ENCODE measurements at regions of chr13 and their contacts with region 1.

Region 1: GRCh38 chr13:50123862-50124536 is 108.8 kb downstream of the KCNRG start:
- DNase-seq: no peak
- H3K4me3 ChIP-seq: peak overlapping the region; percentile 81
- H3K27ac ChIP-seq: peak overlapping the region; percentile 56
- H3K4me1 ChIP-seq: peaks cover 64% of the 10 kb centered on the region
- CTCF ChIP-seq: no peak

Region 2: GRCh38 chr13:49936085-49936940 is 187.7 kb before region 1 on chr13 and contains the start of gene SPRYD7:
- CTCF ChIA-PET with region 1: no interaction called
- POLR2A ChIA-PET with region 1: no interaction called
- intact Hi-C with region 1: loop called (anchors 5 kb)
- DNase-seq: peak; percentile 98
- H3K4me3 ChIP-seq: peak within 1 kb of the TSS; percentile 81
- H3K27ac ChIP-seq: peak within 1 kb of the TSS; percentile 34
- H3K4me1 ChIP-seq: peaks cover 29% of the 10 kb centered on the region
- CTCF ChIP-seq: peak; percentile 84
- total RNA-seq, gene SPRYD7: 5.0 and 6.8 TPM in 2 replicates

Region 3: DNA sequence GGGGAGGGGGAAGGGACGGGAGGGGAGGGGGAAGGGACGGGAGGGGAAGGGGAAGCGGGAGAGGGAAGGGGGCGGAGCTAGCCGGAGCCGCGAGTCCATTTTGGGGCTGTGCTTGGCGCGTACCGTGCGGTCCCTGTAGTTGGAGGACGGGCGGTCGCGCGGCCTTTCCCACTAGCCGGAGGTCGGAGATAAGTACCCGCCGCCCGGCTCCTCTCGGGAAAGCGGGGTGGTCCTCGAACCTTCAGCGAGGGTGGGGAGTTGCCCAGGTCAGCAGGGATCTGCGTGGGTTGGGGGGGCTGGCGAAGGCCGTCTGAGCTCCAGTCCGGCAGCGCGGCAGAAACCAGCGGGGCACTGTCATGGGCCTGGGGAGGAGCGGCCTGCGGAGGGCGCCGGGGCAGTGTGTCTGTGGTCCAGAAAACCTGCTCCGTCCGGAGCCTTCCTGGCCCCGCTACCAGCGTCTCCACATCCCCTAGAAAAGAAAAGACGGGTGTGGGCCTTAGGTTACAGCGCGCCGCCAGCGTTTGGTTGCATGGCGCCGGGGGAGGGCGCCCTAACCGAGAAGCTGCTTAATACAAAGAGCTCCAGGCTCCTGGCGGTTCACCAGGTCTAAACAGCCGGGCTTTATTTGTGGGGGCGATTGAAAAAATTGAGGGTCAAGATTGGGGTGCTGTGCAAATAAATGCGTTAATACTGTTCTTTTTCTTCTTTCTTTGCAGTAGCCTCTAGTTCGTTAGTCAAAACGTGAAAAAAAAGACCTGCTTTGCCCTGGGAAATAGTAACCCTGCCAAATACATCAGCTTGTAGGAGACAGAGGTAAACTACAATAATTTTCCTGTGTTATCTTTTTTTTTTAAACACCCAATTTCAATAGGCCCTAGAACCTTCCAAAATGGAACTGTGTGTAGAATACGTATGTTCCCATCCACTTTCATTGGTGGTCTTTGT is 126.8 kb before region 1 on chr13 and contains the start of gene TRIM13:
- CTCF ChIA-PET with region 1: interaction called, 4 read pairs
- POLR2A ChIA-PET with region 1: interaction called, 3 read pairs
- intact Hi-C with region 1: loop called (anchors 2 kb)
- DNase-seq: peak; percentile 92
- H3K4me3 ChIP-seq: peak within 1 kb of the TSS; percentile 94
- H3K27ac ChIP-seq: peak within 1 kb of the TSS; percentile 87
- H3K4me1 ChIP-seq: peaks cover 39% of the 10 kb centered on the region
- CTCF ChIP-seq: peak; percentile 97
- total RNA-seq, gene TRIM13: 9.5 and 12.5 TPM in 2 replicates

Region 4: GRCh38 chr13:50140581-50141374 is 16.8 kb after region 1 on chr13:
- CTCF ChIA-PET with region 1: no interaction called
- POLR2A ChIA-PET with region 1: interaction called, 17 read pairs
- intact Hi-C with region 1: no loop called
- DNase-seq: no peak
- H3K4me3 ChIP-seq: no peak overlapping the region
- H3K27ac ChIP-seq: no peak overlapping the region
- H3K4me1 ChIP-seq: peaks cover 35% of the 10 kb centered on the region
- CTCF ChIP-seq: no peak

Region 5: DNA sequence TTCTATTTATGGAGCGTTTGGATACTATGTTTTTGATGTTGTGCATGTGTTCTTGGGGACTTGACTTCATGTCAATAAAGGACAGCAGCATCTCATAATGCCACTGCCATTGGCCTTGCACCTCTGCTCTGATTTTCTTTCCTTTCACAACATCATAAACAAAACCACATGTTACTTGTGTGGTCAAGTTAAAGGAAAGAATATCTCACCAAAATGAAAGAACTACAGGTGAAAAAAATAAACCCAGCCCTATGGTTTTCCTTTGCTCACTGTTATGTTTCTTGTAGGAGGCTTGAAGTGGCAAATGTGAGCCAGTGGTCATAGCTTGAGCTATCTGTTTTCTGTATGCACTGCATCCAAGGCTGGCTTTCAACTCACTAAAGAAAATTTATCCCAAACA is 131.6 kb after region 1 on chr13:
- CTCF ChIA-PET with region 1: no interaction called
- POLR2A ChIA-PET with region 1: no interaction called
- intact Hi-C with region 1: no loop called
- DNase-seq: no peak
- H3K4me3 ChIP-seq: no peak overlapping the region
- H3K27ac ChIP-seq: no peak overlapping the region
- H3K4me1 ChIP-seq: peaks cover 10% of the 10 kb centered on the region
- CTCF ChIP-seq: no peak

Region 6: DNA sequence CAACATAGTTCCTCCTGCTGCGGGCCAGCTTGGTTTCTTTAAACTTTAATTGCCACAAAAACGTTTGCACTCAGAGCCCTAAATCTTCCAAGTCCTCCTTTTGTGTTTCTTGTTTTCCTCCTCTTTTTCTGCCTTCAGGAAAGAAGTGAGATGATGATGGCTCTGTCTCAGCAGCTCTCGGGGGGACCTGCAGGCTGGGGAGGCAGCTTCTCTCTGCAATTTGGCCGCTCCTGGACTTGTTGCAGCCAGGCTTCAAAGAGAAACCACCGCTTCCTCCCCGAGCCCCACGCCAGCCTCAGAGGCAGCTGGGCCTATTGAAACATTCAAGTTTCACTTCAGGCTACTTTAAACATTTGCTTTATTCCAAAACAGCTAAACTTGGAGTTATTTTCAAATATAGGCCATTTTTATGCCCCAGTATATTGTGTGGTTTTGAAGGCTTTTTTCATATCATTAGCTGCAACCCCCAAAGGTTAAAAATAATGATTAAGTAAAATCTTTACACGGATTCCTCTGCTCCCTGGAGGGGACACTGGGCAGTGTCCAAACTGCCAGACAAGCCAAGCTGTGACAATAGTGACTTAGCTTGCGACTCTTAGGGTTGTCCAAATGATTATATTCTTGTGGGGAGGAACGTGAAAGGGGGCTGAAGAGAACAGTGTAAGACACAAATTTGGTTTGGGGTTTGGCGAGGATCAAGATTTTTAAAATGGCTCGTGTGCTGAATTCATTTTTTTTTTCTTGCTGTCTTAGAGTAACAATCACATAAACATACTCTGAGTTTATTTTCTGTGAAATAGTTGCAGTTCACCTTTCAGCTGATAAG is 388.7 kb after region 1 on chr13:
- CTCF ChIA-PET with region 1: no interaction called
- POLR2A ChIA-PET with region 1: interaction called, 12 read pairs
- intact Hi-C with region 1: loop called (anchors 2 kb)
- DNase-seq: peak; percentile 95
- H3K4me3 ChIP-seq: peak overlapping the region; percentile 65
- H3K27ac ChIP-seq: peak overlapping the region; percentile 98
- H3K4me1 ChIP-seq: peaks cover 78% of the 10 kb centered on the region
- CTCF ChIP-seq: peak; percentile 68